Mammary epithelial cell (primary cell): ENCODE measurements at regions of chr1 and their contacts with region 1.

Region 1: DNA sequence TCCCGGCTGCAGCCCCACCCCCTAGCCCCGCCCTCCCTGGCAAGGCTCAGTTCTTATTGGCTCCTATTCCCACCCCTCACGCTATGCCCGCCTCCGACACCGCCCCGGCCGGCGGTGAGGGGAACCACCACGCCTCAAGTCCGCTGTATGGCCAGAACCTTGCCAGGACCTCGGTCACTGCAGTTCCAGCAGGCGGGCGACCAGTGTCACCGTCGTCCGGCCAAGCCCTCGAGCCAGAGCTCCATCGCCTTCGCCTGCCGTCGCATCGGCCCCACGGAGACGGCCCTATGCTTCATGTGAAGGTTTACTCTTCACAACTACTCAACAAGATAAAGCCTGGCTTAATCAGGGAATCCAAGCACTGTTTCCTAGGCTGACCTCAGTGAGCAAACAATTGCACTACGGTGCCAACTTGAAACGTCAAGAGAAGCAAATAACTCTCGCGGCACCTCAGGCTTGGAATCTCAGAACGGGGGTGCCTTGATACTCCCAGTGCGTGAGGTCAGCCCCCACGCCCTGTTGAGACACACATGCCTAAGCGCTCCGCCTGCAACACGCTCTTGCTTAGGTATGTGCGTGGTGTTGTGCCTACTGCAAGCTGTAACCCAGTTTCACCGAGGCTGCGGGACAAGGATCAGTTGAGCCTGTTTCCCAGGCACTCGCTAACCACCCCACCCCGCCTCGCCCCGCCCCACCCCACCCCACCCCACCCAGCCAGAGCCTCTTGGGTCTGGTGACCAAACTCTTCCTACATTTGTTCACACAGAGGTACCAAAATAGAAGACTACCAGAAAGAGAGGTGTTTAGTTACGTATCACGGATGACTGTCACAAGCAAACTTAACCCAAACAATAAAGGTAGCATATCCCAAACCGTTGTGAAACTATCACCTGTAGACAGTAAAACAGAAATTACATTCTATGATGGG is 498 bp upstream of the DENND2C start:
- DNase-seq: peak; percentile 97
- H3K4me3 ChIP-seq: peak overlapping the region; percentile 72 to 97 (median 97)
- H3K27ac ChIP-seq: peak overlapping the region; percentile 100
- H3K4me1 ChIP-seq: peaks cover 13% of the 10 kb centered on the region
- H3K27me3 ChIP-seq: no peaks in the 10 kb centered on the region
- CTCF ChIP-seq: no peak

Region 2: DNA sequence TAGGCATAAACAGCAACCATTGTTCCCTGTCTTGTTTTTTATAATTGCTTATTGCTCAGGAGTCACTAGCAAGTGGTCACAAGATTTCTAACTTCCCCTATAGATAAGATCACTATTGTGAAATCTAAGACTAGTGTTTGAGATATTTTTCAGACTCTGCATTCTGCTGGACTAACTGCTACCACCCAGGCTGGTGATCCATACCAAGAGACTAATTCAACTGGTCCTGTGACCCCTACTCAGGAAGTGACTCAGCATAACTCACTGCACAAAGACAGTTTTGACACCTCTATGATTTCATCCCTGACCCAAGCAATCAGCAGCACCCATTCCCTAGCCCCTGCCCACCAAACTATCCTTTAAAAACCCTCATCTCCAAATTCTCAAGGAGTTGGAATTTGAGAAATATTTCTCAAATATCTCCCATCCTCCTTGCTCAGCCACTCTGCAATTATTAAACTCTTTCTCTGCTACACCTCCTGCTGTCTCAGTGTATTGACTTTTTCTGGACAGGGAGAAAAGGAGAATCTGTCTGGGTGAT is 212.0 kb before region 1 on chr1:
- CTCF ChIA-PET with region 1: no interaction called
- dilution Hi-C with region 1: no loop called
- in situ Hi-C with region 1: no loop called
- intact Hi-C with region 1: loop called (anchors 10 kb)
- DNase-seq: peak; percentile 88
- H3K4me3 ChIP-seq: no peak overlapping the region
- H3K27ac ChIP-seq: peak overlapping the region; percentile 36
- H3K4me1 ChIP-seq: peaks cover 12% of the 10 kb centered on the region
- H3K27me3 ChIP-seq: no peaks in the 10 kb centered on the region
- CTCF ChIP-seq: no peak

Region 3: DNA sequence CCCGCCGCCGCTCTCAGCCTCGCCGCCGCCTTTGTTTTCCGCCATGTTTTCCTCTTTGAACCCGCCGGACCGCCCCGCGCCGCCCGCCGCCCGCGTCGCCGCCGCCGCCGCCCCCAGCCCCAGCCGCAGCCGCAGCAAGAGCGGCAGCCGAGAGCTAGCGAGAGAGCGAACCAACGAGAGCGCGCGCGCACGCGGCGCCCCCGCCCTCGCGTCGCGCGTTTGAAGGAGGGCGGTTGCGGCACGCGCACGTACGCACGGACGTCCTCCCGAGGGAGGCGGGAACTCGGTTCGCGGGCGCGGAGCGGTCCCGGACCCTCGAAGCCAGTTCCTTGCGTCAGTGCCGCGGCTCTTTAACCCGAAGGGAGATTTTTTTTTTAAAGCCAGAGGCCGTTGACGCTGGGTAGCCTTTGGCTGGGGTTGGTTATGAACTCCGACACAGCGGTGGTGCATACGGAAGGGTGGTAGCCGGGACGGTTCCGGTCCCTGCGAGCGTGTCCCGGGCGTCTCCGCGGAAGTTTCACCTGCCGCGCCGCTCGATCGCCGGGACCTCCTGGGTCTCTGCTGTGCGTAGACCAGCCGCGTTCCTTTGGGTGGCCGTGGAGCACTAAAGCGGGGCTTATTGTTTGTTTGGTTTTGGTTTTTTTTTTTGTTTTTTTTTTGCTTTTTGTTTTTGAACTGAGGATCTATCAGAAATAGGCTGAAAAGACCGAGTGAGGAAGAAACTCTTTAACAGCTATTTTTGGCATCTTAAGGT is 159.1 kb before region 1 on chr1 and contains the start of gene TRIM33:
- CTCF ChIA-PET with region 1: no interaction called
- dilution Hi-C with region 1: no loop called
- in situ Hi-C with region 1: no loop called
- intact Hi-C with region 1: loop called (anchors 2 kb)
- DNase-seq: peak; percentile 93
- H3K4me3 ChIP-seq: peak within 1 kb of the TSS; percentile 99
- H3K27ac ChIP-seq: peak within 1 kb of the TSS; percentile 82
- H3K4me1 ChIP-seq: peaks cover 14% of the 10 kb centered on the region
- H3K27me3 ChIP-seq: no peaks in the 10 kb centered on the region
- CTCF ChIP-seq: no peak
- total RNA-seq, gene TRIM33: 32.8 to 43.8 TPM

Region 4: GRCh38 chr1:114581335-114582287 is 88.7 kb before region 1 on chr1 and contains the start of gene BCAS2:
- CTCF ChIA-PET with region 1: no interaction called
- dilution Hi-C with region 1: no loop called
- in situ Hi-C with region 1: no loop called
- intact Hi-C with region 1: loop called (anchors 1 kb)
- DNase-seq: peak; percentile 96
- H3K4me3 ChIP-seq: peak within 1 kb of the TSS; percentile 63 to 95 (median 90)
- H3K27ac ChIP-seq: peak within 1 kb of the TSS; percentile 96
- H3K4me1 ChIP-seq: peaks cover 7% of the 10 kb centered on the region
- H3K27me3 ChIP-seq: no peaks in the 10 kb centered on the region
- CTCF ChIP-seq: no peak
- total RNA-seq, gene BCAS2: 30.2 to 46.5 TPM

Region 5: DNA sequence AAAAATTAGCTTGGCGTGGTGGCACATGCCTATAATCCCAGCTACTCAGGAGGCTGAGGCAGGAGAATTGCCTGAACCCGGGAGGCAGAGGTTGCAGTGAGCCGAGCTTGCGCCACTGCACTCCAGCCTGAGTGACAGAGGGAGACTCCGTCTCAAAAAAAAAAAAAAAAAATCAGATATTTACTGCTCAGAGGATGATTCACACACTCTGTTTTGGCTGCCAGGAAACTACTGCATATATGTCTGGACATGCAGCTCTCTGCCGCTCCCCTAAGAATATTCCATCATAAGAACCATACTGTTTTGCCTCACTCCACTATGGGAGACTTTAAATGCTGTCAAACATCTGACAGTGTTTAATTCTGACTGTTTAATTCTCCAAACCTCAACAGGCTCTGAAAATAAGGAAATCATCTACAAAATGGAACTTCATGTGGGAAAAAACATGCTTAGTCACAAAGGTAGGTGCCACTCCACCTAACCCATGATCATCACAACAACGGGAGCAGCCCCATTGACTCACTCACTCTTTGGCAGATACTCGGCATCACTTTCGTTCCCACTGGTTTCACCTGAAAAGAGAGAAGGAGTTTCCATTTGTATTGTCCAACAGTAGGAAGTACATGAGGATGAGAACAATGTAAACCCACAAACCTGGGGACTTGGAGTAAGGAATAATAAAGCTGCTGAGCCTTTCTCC is 59.7 kb before region 1 on chr1:
- CTCF ChIA-PET with region 1: no interaction called
- dilution Hi-C with region 1: no loop called
- in situ Hi-C with region 1: loop called in 1 of 2 experiments (anchors 10 kb)
- intact Hi-C with region 1: loop called (anchors 1 kb)
- DNase-seq: peak; percentile 99
- H3K4me3 ChIP-seq: peak overlapping the region in 2 of 3 experiments; percentile 28 to 31
- H3K27ac ChIP-seq: peak overlapping the region; percentile 100
- H3K4me1 ChIP-seq: peaks cover 18% of the 10 kb centered on the region
- H3K27me3 ChIP-seq: no peaks in the 10 kb centered on the region
- CTCF ChIP-seq: no peak

Region 6: DNA sequence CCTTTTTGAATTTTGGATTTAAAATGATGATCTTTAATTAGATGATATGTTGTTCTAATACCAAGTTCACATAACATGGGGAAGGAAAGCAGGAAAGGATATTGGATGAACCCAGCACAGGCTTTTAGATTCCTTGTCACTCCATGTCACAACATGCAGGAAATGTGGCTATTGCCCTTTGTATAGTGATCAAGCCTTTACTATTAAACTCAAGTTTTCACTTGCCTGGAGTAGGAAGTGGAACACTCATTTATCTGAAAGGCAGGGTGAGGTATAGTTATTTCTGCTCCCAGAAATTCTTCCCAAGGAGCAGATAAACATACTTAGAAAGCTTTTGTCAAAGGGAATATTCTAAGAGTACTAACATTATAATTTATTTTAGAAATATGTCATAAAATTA is 51.7 kb before region 1 on chr1:
- CTCF ChIA-PET with region 1: no interaction called
- dilution Hi-C with region 1: no loop called
- in situ Hi-C with region 1: loop called in 1 of 2 experiments (anchors 10 kb)
- intact Hi-C with region 1: loop called (anchors 2 kb)
- DNase-seq: peak; percentile 74
- H3K4me3 ChIP-seq: peak overlapping the region in 1 of 3 experiments; percentile 3
- H3K27ac ChIP-seq: peak overlapping the region; percentile 78
- H3K4me1 ChIP-seq: peaks cover 7% of the 10 kb centered on the region
- H3K27me3 ChIP-seq: no peaks in the 10 kb centered on the region
- CTCF ChIP-seq: no peak

Region 7: GRCh38 chr1:114956564-114956963 is 286.2 kb after region 1 on chr1:
- CTCF ChIA-PET with region 1: no interaction called
- dilution Hi-C with region 1: no loop called
- in situ Hi-C with region 1: no loop called
- intact Hi-C with region 1: loop called (anchors 2 kb)
- DNase-seq: peak; percentile 23
- H3K4me3 ChIP-seq: no peak overlapping the region
- H3K27ac ChIP-seq: no peak overlapping the region
- H3K4me1 ChIP-seq: no peaks in the 10 kb centered on the region
- H3K27me3 ChIP-seq: peaks cover 2% of the 10 kb centered on the region
- CTCF ChIP-seq: peak; percentile 74 to 84

Region 8: DNA sequence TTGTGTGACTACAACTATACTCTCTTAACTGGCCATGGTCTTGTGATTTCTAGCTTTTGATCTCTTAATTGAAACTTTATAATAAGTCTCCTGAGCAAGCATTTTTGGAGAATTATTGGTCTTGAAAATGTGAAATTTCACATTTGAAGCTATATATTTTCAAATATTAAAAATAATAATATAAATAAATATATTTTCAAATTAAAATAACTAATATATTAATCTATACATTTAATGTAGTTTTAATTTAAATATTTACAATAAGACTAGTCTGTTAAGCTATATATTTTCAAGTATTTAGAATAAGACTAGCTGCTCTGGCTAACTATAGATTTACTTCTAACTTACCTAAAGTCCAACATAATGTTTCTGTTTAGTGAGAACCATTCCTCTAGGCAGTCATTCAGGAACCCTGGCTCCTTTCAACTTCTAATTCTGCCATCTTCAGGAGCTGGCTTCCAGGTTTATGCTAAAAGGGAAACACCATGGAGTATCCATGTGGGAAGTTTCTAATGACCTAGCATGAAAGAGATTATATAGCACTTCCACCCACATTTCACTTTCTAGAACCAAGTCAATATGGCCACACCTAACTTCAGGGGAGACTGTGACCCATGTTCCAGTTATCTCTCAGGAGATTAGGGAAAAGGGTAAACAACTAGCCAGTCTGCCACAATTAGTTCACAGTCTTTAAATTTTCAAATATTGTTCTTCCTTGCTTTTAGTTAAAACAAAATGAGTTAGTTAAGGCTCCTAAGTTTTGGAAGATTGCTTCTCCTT is 327.4 kb after region 1 on chr1:
- CTCF ChIA-PET with region 1: no interaction called
- dilution Hi-C with region 1: no loop called
- in situ Hi-C with region 1: no loop called
- intact Hi-C with region 1: no loop called
- DNase-seq: no peak
- H3K4me3 ChIP-seq: no peak overlapping the region
- H3K27ac ChIP-seq: no peak overlapping the region
- H3K4me1 ChIP-seq: no peaks in the 10 kb centered on the region
- H3K27me3 ChIP-seq: no peaks in the 10 kb centered on the region
- CTCF ChIP-seq: no peak